ENCODE measurements at regions of chr17 and their contacts with region 1.

Region 1: GRCh38 chr17:10087081-10087754 is 111.2 kb downstream of the GAS7 start:
- DNase-seq: no peak
- ATAC-seq: peak; percentile 49
- H3K4me3 Mint-ChIP-seq: no peak overlapping the region
- H3K27ac Mint-ChIP-seq: no peak overlapping the region
- H3K4me1 Mint-ChIP-seq: peaks cover 21% of the 10 kb centered on the region
- H3K27me3 Mint-ChIP-seq: no peaks in the 10 kb centered on the region
- CTCF ChIP-seq: no peak

Region 2: DNA sequence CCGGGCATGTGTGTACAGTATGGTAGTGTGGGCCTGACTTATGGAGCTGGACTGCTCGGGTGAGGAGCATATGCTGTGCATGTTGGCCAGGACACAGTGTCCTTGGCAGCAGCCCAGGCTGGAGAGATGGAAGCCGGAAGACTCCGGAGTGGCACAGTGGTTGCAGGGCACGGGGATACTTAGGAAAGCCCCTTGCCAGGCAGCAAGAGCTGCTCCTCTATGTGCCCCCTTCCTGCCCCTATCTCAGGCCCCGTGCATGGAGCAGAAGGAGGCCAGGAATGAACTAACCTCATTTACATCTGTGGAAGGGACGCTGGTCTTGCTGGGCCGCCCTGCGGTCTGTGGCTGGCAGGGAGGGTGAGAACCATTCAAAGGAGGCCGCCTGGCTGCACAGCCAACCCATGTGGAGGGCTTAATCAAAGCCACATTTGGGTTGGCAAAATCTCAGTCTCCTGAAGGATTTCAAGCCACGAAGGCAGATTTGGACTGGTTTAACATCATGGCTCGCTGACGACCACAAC is 149.9 kb before region 1 on chr17:
- CTCF ChIA-PET with region 1: no interaction called
- POLR2A ChIA-PET with region 1: no interaction called
- intact Hi-C with region 1: no loop called
- DNase-seq: no peak
- ATAC-seq: no peak
- H3K4me3 Mint-ChIP-seq: no peak overlapping the region
- H3K27ac Mint-ChIP-seq: no peak overlapping the region
- H3K4me1 Mint-ChIP-seq: no peaks in the 10 kb centered on the region
- H3K27me3 Mint-ChIP-seq: no peaks in the 10 kb centered on the region
- CTCF ChIP-seq: no peak

Region 3: GRCh38 chr17:10072561-10073385 is 14.4 kb before region 1 on chr17:
- CTCF ChIA-PET with region 1: no interaction called
- POLR2A ChIA-PET with region 1: no interaction called
- intact Hi-C with region 1: loop called (anchors 2 kb)
- DNase-seq: no peak
- ATAC-seq: no peak
- H3K4me3 Mint-ChIP-seq: no peak overlapping the region
- H3K27ac Mint-ChIP-seq: no peak overlapping the region
- H3K4me1 Mint-ChIP-seq: peaks cover 2% of the 10 kb centered on the region
- H3K27me3 Mint-ChIP-seq: peaks cover 4% of the 10 kb centered on the region
- CTCF ChIP-seq: no peak

Region 4: GRCh38 chr17:10103712-10104111 is 16.5 kb after region 1 on chr17:
- CTCF ChIA-PET with region 1: no interaction called
- POLR2A ChIA-PET with region 1: no interaction called
- intact Hi-C with region 1: loop called (anchors 2 kb)
- DNase-seq: no peak
- ATAC-seq: no peak
- H3K4me3 Mint-ChIP-seq: no peak overlapping the region
- H3K27ac Mint-ChIP-seq: no peak overlapping the region
- H3K4me1 Mint-ChIP-seq: peaks cover 7% of the 10 kb centered on the region
- H3K27me3 Mint-ChIP-seq: peaks cover 2% of the 10 kb centered on the region
- CTCF ChIP-seq: no peak

Region 5: GRCh38 chr17:10115071-10115539 is 27.9 kb after region 1 on chr17:
- CTCF ChIA-PET with region 1: no interaction called
- POLR2A ChIA-PET with region 1: no interaction called
- intact Hi-C with region 1: no loop called
- DNase-seq: peak; percentile 70
- ATAC-seq: peak; percentile 85
- H3K4me3 Mint-ChIP-seq: peak overlapping the region; percentile 76
- H3K27ac Mint-ChIP-seq: peak overlapping the region; percentile 96
- H3K4me1 Mint-ChIP-seq: peaks cover 72% of the 10 kb centered on the region
- H3K27me3 Mint-ChIP-seq: no peaks in the 10 kb centered on the region
- CTCF ChIP-seq: no peak

Measured in activated B cell treated with CpG ODN at 0.5 μM for 24 hours (primary cell).